ENCODE measurements at regions of chr12 and their contacts with region 1.

Region 1: DNA sequence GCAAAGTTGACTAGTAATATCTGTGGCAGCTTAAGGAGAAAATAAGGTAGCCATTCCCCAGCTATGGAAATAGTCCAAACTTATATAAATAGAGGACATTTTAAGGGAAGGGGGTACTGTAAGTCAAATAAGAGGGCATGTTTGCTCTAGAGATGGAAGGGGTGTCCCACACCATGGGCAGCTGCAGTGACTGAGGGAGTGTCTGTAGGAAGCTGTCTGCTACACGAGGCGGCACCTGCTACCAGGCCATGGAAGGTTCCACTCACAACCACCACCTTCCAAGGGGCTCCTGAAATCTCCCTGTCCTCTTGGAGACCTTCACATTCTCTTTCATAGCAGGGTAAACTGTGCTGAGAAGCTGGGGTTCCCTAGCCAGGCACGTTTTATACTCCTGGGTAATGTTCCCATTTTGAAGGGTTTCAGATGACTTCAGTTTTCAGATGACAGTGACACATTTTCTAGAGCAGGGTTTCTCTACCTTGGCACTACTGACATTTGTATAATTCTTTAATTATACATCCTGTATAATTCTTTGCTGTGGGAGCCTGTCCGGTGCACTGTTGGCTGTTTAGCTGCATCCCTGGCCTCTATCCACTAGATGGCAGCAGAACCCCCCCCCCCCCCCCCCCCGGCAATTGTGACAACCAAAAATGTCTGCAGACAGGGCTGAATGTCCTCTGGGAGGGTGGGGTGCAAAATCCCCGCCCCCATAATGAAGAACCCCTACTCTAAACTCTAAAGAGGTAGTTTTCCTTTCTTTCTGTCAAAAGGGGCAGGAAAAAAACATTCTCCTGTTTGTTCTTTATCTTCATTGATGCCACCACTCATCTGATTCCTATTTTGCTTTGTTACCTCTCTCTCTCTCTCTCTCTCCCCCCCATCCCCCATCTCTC is 11.6 kb upstream of the SMCO2 start:
- DNase-seq: no peak
- ATAC-seq: peak in 1 of 2 donors; percentile 14

Region 2: DNA sequence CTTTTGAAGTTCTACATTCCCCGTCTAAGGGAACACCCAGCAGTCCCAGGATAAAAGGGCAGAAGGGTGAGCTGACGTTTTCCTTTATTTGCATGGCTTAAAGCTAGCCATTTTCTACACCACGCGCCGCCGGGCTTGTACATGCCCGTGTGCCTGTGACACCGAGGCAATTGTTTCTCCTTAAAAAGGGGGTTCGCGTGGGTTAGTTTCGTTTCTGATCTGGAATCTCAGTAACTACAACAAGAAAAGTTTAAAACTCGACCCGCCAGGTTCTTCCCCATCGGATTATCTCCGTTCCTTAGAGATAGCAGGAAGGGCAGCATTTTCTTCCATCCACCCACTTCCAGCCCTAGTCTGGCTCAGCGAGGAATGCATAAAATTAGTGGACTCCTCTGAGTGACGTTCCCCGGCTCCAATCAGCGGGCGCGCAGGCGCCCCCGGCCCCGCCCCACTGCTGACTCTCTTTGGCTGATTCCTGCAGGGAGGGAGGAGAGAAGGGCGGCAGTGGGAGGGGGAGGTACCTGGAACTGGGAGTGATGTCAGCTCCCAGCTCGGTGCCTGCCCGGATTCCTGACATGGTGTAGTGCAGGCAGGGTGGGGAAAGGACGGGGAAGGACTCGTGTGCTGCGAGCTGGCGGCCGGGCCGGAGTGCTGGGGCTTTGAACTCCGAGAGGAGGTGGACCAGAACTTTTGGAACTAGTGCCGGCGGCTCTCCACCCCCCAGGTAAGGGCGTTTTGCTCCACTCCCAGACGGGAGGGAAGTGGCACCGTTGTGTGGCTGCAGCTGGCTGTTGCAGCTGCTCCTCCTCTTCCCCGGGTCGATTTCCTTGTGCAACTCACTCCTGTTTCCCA is 88.9 kb after region 1 on chr12 and contains the start of gene PPFIBP1:
- intact Hi-C with region 1: loop called in 1 of 2 experiments (anchors 10 kb)
- DNase-seq: peak; percentile 97
- ATAC-seq: peak; percentile 98
- total RNA-seq, gene PPFIBP1: 92.7 to 123 TPM

Measured in left cardiac atrium (tissue), 4 donors.